ENCODE measurements at regions of chr22 and their contacts with region 1.

Region 1: DNA sequence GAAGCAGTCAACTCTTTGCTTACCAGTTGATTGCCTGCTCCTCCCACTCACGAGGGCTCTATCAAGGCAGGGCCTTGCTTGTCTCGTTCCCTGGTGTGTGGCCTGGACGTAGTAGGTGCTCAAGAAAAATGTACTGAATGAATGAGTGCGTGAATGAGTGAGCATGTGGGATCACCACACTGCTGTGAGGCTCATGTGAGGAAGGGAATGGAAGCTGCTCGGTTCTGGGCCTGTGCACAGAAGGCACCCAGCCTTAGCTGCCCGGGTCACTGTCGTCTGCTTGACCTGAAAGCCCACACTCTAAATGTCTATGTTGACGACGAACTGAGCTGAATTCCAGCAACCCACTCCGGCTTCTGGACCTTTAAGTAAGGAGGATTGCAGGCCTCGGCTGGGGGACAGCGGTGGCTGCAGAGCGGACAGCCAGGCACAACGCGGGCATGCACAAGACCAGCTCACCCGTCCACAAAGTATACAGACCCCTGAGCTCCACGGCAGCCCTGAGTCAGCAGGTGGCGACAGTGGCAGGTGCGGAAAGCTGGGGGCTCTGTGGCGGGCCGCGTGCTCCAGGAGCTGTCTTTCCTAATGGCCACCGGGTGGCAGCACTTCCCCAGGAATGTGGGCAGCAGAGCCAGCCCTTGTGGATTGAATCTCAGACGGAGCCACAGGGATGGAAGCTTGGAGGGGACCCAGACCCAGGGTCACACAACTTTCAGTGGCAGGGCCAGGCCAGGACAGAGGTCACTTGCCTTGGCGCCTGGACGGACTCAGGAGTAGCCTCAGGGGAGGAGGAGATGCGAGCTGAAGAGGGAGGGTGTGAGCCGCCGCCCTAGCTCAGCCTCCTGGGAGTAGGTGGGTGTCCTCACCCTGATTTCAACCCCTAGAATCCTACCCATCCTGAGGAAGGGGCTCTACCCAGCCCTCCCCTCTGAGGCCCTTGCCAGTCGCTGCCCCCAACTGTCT is 5.0 kb upstream of the PICK1 start:
- DNase-seq: no peak
- H3K4me3 ChIP-seq: no peak overlapping the region
- CTCF ChIP-seq: peak; percentile 79

Region 2: GRCh38 chr22:37933711-37934376 is 118.3 kb before region 1 on chr22:
- CTCF ChIA-PET with region 1: no interaction called
- POLR2A ChIA-PET with region 1: no interaction called
- DNase-seq: peak; percentile 31
- H3K4me3 ChIP-seq: no peak overlapping the region
- CTCF ChIP-seq: peak; percentile 100

Region 3: DNA sequence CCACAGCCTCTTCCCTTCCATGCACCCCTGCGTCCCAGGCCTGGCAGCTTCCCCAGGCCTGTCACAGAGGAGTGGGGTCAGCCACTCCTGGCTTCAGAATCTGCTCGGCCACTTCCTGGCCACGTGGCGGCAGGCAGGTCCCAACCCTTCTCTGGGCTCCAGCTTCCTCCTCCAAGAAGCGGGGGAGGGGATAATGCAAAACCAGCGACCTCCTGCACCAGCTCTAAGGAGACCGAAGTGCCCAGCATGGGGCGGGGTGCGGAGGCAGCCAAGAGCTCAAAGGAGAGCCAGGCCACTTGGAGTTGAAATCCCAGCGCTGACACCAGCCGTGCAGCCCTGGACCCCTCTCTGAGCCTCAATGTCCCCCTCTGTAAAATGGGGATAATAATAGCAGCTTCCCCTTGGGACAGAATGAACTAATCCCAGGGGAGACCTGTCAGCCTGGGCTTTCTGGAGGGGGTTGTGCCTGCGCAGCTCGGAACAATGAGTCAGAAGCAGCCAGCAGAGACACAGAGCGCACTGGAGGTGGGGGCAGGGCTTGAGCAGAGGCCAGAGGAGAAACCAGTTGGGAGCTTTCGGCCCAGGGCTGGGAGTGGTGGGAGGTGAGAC is 17.8 kb before region 1 on chr22:
- CTCF ChIA-PET with region 1: interaction called, 39 read pairs
- POLR2A ChIA-PET with region 1: no interaction called
- DNase-seq: no peak
- H3K4me3 ChIP-seq: no peak overlapping the region
- CTCF ChIP-seq: no peak

Region 4: DNA sequence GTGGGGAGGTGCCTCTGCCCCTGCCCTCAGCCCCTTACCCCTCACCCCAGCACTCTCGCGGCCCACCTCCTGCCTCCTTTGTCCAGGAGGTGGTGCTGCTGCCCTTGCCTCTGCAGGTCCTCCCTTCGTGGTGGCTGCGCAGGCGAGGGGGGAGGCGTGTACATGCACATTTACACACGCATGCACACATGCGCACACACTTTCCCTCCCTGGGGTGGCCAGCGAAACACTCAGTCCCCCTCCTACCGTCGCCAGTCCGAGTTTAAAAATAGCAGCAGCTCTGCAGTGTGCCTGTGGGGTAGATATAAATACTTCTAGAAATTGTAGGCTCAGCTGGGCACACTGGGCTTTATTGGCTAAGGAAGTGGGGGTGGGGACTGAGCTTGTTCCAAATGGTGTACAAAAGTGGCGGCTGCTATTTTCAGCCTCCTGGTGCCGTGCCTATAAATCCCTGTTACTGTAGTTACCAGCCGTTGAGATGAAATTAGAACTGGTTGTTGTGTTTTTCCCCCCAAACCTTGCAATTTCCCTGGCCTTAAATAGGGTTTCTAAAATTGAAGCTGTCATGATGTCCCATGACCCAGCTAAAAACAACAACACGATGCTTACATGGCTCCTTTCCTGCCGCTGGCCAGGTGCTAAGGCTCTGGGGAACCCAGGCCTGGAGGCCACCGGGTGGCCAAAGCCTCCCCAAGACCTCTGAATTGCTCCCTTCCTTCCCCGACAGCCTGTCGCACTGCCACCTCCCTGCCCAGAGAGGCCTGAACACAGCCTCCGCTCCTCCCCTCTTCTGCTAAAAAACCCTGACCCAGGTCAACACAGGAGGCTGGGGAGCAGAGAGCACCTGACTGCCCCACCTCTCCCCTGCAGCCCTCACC is 17.4 kb after region 1 on chr22:
- CTCF ChIA-PET with region 1: interaction called, 57 read pairs
- POLR2A ChIA-PET with region 1: no interaction called
- DNase-seq: no peak
- H3K4me3 ChIP-seq: no peak overlapping the region
- CTCF ChIP-seq: peak; percentile 44

Region 5: DNA sequence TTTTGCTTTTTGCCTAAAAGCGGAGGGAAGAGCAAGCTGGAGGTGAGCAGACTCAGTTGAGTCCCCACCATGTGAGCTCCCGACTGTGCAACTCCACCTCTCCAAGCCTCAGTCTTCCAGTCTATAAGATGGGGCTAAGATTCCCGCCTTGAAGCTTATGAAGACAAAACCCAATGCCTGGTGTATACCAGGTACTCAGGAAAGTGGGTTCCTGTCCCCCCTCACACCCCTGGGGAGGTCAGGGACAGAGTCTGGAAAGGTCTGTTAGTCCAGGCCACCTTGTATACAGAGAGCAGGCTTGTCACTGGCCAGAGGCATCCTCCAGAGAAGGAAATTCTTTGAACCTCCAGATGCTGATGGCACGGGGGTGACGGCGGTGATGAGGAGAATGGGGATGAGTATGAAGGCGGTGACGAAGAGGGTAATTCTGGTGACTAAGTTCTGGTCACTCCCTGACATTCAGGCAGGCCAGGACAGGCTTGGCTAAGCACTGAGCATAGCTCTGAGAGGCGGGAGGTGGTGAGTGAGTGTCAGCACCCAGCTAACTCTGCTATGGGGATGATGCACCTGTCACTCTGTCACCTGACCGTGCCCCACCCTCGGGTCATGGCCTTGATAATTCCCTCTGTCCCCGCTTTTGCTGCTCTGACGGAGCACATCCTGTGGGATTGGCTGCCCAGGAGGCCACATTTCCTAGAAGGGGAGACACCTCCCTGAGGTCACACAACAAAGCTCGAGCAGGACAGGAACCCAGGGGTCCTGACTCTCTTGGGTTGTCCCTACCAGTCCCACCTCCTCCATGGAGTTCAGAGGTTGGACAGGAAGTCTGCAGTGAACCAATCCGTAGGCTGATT is 295.9 kb after region 1 on chr22:
- CTCF ChIA-PET with region 1: interaction called, 20 read pairs
- POLR2A ChIA-PET with region 1: no interaction called
- DNase-seq: no peak
- H3K4me3 ChIP-seq: no peak overlapping the region
- CTCF ChIP-seq: no peak

Region 6: GRCh38 chr22:38490915-38491314 is 438.7 kb after region 1 on chr22:
- CTCF ChIA-PET with region 1: interaction called, 11 read pairs
- POLR2A ChIA-PET with region 1: no interaction called
- DNase-seq: no peak
- H3K4me3 ChIP-seq: no peak overlapping the region
- CTCF ChIP-seq: no peak

Region 7: DNA sequence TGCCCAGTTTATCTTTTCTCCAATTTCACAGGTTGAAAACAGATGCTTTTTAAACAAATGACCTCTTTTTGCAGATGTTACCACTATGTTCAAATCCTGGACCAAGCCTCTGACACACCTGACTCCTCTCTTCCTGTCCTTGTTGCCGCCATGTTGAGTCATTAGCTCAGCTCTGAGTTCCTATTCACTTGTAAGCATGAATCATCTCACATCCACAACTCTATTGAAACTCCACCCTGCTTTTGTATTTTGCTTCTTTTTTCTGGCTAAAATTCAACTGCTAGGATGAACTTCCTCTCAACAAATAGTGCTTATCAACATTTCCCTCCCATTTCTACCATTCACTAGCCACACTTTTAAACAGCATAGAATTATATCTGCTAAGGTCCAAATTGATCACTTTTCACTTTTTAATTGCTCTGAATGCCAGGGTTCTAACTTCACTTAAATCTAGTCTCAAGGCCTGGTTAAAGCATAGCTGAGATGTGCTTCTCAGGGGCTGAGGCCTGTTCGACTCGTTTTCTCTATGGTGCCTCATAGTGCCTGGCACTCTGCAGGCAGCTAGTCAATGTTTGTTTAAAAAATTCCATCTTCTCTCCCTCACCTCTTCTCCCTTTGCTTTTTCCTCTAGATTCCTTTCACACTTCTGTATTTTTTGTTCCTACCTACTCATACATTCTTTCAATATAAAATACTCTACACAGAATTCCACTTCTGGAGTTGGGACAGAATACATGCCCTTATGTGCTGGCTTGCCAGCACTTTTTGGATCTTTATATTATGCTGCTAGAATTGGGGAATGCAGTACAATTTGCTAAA is 644.6 kb after region 1 on chr22:
- CTCF ChIA-PET with region 1: interaction called, 15 read pairs
- POLR2A ChIA-PET with region 1: no interaction called
- DNase-seq: no peak
- H3K4me3 ChIP-seq: peak overlapping the region; percentile 25
- CTCF ChIP-seq: no peak